Sigmoid colon (tissue), 7 donors: ENCODE measurements at regions of chr6 and their contacts with region 1.

Region 1: GRCh38 chr6:42260972-42261371 is 43.3 kb upstream of the MRPS10 start:
- DNase-seq: peak; percentile 70
- H3K4me3 ChIP-seq: no peak overlapping the region
- H3K27ac ChIP-seq: peak overlapping the region in 3 of 4 donors; percentile 13 to 41 (median 40)
- H3K4me1 ChIP-seq: peaks cover 0 to 24% (median 6%) of the 10 kb centered on the region in 4 donors
- H3K27me3 ChIP-seq: no peaks in the 10 kb centered on the region
- CTCF ChIP-seq: peak; percentile 22 to 60 (median 34)
- EP300 ChIP-seq: no peak
- POLR2A ChIP-seq: no peak

Region 2: DNA sequence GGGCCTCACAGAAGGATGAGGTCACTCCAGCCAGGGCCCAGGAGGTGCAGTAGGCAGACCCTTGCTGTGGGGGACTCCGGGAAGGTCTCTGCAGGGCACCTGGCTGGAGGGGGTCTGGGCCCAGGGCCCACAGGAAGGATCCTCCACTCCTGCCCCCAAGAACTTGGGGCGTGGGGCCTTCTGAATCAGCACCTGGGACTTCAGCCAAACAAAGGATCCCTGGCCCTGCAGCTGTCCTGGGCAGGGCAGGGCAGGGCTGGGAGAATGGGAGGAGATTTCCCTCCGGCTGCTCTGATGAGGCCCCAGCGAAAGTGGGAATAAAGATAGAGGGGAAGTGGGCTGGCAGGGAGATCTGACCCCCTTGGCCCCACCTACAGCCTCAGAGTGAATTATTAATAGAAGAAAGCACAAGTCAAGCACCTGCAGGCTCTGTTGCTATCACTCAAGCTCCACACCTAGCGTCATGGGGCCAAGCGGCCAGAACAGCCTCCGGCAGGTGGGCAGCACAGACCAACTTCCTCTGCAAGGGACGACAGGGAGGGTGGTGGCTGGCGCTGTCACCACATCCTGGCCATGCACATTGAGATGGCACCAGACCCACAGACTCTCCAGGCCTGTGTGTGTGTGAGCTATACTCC is 18.3 kb after region 1 on chr6:
- intact Hi-C with region 1: no loop called
- DNase-seq: peak; percentile 71
- H3K4me3 ChIP-seq: no peak overlapping the region
- H3K27ac ChIP-seq: peak overlapping the region in 1 of 4 donors; percentile 49
- H3K4me1 ChIP-seq: peaks cover 0 to 35% (median 11%) of the 10 kb centered on the region in 4 donors
- H3K27me3 ChIP-seq: no peaks in the 10 kb centered on the region
- CTCF ChIP-seq: no peak
- EP300 ChIP-seq: no peak
- POLR2A ChIP-seq: no peak

Region 3: DNA sequence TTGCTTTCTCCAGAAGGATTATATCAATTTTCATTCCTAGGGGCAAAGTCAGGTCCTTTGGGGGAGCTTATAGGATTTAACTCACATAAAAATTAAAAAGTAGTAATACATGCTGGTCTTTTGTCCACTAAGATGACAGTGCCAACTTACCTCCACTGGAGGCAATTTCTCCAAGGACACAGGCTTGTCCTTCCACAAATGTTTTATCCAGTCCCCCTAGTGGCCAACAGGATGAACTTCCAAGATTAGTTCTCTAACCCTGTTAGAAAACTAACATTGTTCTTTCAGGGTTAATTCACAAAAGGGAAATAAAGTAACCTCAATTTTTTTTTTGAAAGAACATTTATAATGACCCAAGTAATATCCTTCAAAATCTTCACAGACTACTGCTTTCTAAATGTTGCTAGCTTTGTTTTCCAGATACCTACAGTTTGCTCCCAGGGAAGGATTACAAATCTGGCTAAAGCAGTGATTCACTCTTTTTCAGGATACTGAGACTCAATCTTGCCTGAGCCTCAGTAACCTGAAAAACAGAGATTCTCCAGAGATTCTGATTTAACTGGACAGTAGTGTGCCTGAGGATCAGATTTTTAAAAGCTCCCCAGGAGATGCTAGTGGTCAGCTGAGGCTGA is 271.2 kb after region 1 on chr6:
- intact Hi-C with region 1: loop called (anchors 5 kb)
- DNase-seq: no peak
- H3K4me3 ChIP-seq: no peak overlapping the region
- H3K27ac ChIP-seq: no peak overlapping the region
- H3K4me1 ChIP-seq: no peaks in the 10 kb centered on the region
- H3K27me3 ChIP-seq: no peaks in the 10 kb centered on the region
- CTCF ChIP-seq: peak; percentile 48 to 90 (median 85)
- EP300 ChIP-seq: no peak
- POLR2A ChIP-seq: no peak

Region 4: DNA sequence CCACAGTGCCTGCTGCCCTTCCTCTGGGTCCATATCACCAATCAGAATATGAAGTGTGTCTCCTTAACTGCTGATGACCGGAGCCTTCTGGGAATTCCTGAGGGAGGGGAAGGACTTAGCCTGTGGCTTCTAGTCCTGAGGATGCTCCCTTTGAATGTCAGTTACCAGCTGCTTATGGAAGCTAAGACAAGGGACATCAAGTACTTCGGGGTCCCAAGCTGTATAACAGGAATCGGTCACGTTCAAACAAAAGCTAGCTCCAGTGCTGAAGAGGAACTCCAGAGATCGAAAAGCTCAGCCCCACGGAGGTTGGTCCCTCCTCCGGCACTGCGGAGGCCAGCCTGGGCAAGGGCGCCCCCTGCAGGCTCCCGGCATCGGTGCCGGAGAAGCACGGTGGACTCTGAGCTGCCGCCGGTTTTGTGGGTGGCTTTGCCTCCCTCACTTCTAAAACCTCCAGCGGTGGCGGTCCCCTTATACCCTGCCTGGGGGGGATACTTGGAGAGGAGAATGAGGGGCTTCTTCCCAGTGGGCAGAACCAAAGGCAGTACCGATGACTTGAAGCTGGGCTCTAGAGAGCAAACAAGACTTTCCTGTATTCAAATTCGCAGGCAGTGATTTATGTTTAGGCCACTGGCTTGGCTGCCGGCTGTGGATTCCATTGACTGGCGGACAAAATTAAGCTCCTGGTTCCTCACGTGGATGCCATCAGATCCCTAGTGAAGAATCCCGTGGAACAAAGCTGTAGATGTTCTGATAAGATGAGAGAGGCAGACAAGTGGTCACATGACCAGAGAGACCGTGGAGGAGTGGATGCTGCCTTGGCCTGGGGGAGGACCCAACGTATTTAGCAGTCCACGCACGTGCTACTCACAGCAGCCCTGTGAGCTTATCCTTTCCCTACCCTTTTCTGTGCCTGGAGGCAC is 286.7 kb after region 1 on chr6:
- intact Hi-C with region 1: loop called (anchors 2 kb)
- DNase-seq: peak; percentile 90
- H3K4me3 ChIP-seq: peak overlapping the region; percentile 31 to 53 (median 46)
- H3K27ac ChIP-seq: peak overlapping the region; percentile 63 to 76 (median 74)
- H3K4me1 ChIP-seq: peaks cover 0 to 10% (median 5%) of the 10 kb centered on the region in 4 donors
- H3K27me3 ChIP-seq: no peaks in the 10 kb centered on the region
- CTCF ChIP-seq: peak; percentile 79 to 95 (median 92)
- EP300 ChIP-seq: no peak
- POLR2A ChIP-seq: no peak

Region 5: DNA sequence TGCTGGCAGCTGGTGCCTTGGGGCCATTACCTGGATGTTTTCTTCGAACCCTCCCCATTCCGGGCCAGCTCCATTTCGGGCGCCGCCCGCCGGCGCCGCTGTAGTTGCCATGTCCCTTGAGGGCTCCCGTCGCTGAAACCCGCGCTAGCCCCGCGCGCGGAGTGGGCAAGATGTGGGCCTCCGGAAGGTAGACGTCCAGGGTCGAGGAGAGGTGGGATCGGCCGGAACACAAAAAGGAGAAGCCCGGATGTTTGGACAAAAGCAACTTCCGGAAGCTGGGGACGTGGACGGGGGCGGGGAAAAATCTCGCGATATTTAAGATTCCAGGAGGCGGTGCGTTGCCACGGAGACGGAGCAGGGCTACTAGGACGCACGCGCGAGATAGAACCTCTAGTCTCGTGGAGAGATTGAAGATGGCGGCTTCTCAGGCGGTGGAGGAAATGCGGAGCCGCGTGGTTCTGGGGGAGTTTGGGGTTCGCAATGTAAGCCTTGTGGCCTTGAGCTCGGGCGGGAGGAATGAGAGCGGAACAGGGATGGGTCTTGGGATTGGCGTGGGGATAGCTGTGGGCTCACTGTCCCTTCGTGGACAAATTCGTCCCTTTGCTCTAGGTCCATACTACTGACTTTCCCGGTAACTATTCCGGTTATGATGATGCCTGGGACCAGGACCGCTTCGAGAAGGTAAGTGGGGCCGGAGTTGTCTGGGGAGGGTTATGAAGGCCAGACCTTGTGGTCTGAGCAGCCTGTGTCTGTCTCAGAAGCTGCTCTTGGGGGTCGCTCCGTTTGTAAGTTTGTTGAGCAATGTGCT is 1255.9 kb after region 1 on chr6 and contains the starts of genes POLR1C and YIPF3:
- intact Hi-C with region 1: no loop called
- DNase-seq: peak; percentile 99
- H3K4me3 ChIP-seq: peak within 1 kb of the TSS; percentile 73 to 94 (median 79)
- H3K27ac ChIP-seq: peak within 1 kb of the TSS; percentile 84 to 91 (median 85)
- H3K4me1 ChIP-seq: peaks cover 0 to 41% (median 35%) of the 10 kb centered on the region in 4 donors
- H3K27me3 ChIP-seq: no peaks in the 10 kb centered on the region
- CTCF ChIP-seq: no peak
- EP300 ChIP-seq: no peak
- POLR2A ChIP-seq: peak in 1 of 2 donors; percentile 45
- total RNA-seq, gene POLR1C: 11.9 to 25.5 (median 19.1) TPM
- total RNA-seq, gene YIPF3: 58.4 to 74.2 (median 66.0) TPM